Left colon (tissue), 2 donors: ENCODE measurements at regions of chr12 and their contacts with region 1.

Region 1: GRCh38 chr12:93778306-93778705 is 101.1 kb downstream of the CRADD start:
- DNase-seq: peak in 1 of 2 donors; percentile 34
- ATAC-seq: no peak

Region 2: GRCh38 chr12:93979189-93979588 is 200.9 kb after region 1 on chr12:
- intact Hi-C with region 1: loop called in 1 of 2 experiments (anchors 10 kb)
- DNase-seq: peak in 1 of 2 donors; percentile 35
- ATAC-seq: peak; percentile 71